ENCODE measurements at regions of chr22 and their contacts with region 1.

Region 1: DNA sequence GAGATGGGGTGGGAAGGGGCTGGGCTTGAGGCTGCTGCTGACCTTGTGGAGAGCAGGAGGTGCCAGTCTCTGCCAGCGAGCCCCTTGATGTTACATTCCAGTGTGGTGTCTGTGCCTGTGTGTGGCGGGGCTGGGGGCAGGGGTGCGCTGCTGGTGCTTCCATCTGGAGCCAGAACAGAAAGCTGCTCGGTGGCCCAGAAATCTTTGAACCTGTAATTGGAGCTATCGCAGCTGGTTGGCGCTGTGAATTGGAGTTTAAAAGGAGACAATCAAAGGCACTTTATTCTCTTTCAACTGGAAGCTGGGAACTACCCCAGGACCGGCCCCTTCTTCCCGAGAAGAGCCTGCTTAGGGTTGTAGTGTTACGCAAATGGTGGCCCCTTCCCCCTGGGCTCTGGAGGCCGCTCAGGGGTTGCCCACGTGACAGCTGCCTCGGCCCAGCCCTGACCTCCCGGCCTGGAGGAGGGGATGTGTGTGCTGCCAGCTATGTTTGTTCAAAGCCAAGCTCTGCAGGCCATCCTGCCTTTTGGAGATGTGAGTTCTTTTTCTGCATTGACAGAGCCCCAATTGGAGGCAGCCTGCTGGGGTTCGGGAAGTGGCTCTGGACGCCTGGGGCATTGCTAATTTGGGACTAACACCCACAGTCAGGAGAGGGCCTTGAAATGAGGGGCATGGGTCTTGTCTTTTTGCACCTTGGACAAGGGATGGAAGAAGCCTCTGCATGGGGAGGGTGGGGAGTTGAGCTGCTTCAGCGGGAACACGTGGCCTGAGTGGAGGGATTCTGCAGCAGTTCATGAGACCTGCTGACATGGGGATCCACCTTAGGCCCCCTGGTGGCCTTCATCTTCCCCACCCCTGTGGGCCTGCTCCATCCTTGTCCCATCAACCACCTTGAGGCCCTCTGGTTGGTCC is 14.0 kb upstream of the ARSA start:
- DNase-seq: peak; percentile 44 to 64 (median 63)
- H3K4me3 ChIP-seq: peak overlapping the region in 2 of 7 experiments; percentile 26 to 46
- H3K27ac ChIP-seq: no peak overlapping the region
- H3K4me1 ChIP-seq: peaks cover 0 to 13% (median 11%) of the 10 kb centered on the region in 4 experiments
- H3K27me3 ChIP-seq: peaks cover 0 to 11% (median 3%) of the 10 kb centered on the region in 5 experiments

Region 2: GRCh38 chr22:50610041-50610451 is 31.9 kb before region 1 on chr22:
- CTCF ChIA-PET with region 1: no interaction called
- POLR2A ChIA-PET with region 1: no interaction called
- DNase-seq: no peak
- H3K4me3 ChIP-seq: no peak overlapping the region
- H3K27ac ChIP-seq: no peak overlapping the region
- H3K4me1 ChIP-seq: no peaks in the 10 kb centered on the region
- H3K27me3 ChIP-seq: peaks cover 0 to 69% (median 15%) of the 10 kb centered on the region in 5 experiments

Region 3: DNA sequence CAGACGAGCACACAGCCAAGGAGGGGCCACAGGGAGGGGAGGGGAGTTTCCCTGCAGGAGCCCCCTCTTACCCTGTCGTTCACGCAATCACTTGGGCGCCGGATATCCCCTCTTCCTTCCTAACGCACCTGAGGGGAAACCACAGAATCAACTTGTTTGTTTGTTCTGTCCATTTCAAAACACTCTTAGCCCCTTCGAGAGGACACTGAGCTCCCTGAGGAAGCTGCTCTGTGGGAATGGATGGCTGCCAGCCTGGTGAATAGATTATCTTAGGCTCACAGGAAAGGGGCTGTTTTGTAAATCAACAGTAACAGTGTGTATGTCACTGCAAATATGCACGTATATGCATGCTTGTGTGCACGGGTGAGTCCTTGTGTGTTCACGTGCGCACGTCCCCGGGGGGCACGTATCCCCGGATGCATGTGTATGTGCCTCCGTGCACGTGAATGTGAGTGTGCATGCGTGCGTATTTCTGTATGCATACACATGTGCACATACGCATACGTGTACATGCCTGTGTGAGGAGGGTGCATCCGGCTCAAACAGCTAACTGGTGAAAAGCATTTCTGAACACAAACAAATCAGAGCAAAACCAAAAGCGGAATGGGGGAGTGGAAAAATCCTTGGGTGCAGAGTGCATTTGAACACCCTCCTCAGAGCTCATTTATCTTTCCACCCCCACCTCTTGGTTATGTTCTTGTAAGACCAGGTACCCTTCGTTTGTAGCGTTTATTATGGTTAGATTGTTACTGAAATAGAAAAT is 21.2 kb before region 1 on chr22:
- CTCF ChIA-PET with region 1: interaction called, 22 read pairs
- POLR2A ChIA-PET with region 1: no interaction called
- DNase-seq: peak; percentile 74 to 92 (median 88)
- H3K4me3 ChIP-seq: peak overlapping the region in 6 of 7 experiments; percentile 61 to 82 (median 66)
- H3K27ac ChIP-seq: no peak overlapping the region
- H3K4me1 ChIP-seq: peaks cover 13 to 35% (median 29%) of the 10 kb centered on the region in 4 experiments
- H3K27me3 ChIP-seq: no peaks in the 10 kb centered on the region

Region 4: DNA sequence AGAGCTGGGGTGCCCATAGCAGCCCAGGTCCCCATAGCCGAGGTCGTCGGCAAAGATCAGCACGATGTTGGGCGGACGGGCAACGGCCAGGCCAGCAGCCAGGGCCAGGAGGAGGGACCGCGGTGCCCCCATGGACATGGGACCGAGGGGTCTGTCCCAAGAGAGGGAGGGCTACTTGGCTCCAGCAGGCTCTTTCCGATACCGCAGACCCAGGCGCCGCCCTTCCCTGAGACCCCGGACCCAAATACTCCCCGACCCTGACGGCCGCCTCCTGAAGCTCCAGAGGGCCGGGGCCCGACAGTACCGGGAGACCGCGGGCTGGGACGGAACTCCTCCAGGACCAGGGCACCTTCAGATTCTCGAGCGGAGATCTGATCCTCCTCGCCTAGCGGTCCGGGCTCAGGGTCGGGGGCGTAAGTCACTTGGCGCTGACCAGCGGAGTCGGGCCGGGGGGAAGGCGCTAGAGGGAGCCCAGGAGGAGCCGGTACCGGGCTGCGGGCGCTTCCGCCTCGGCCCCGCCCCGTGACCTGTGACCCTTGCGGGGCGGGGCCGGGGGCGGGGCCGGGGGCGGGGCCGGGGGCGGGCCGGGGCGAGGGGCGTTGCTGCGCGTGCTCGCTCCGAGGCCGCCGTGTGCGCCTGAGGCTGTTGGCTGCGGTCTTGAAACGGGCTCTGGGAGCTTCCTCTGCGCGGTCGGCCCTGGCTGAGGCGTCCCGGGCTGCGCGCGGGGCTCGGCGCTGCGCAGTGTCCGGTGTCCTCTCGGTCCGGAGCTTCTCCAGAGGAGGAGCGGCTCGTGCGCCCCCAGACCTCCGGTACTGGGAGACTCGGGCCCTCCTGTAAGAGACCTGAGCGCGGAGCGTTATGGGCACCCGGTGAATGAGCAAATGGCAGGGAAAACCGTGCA is 14.1 kb before region 1 on chr22 and contains the start of gene ARSA:
- CTCF ChIA-PET with region 1: interaction called, 22 read pairs
- POLR2A ChIA-PET with region 1: interaction called, 9 read pairs
- DNase-seq: peak; percentile 80 to 85 (median 83)
- H3K4me3 ChIP-seq: peak within 1 kb of the TSS; percentile 58 to 83 (median 76)
- H3K27ac ChIP-seq: peak within 1 kb of the TSS; percentile 20 to 43
- H3K4me1 ChIP-seq: peaks cover 3 to 33% (median 19%) of the 10 kb centered on the region in 4 experiments
- H3K27me3 ChIP-seq: no peaks in the 10 kb centered on the region

Region 5: DNA sequence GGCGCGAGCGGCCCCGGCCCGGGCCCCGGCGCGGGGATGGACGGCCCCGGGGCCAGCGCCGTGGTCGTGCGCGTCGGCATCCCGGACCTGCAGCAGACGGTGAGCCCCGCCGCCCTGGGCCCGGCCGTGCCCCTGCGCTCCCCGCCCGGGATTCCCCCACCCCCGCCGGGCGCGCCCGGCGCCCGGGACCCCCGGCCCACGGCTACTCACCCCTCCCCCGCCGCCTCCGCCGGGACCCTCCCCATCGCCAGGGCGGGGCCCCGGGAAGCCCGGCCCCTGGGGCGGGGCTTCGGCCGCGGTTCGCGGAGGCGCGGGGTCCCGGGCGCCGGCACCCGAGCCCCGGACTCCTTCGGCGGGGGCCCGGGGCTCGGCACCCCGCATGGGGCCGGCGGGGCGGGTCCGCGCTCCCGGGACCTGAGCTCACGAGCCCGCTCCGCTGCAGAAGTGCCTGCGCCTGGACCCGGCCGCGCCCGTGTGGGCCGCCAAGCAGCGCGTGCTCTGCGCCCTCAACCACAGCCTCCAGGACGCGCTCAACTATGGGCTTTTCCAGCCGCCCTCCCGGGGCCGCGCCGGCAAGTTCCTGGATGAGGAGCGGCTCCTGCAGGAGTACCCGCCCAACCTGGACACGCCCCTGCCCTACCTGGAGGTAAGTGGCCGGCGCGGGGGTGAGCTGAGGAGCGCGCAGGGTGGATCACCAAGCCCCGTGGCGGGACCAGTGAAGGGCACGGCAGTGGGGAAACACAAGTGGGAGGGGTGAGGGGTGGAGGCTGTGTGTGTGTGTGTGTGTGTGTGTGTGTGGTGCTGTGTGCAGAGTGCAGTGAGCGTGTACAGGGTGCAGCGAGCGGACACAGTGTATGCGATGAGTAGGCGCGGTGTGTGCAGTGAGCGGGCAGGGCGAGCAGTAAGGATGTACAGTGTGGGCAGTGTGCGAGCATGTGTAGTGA is 32.9 kb after region 1 on chr22:
- CTCF ChIA-PET with region 1: interaction called, 33 read pairs
- POLR2A ChIA-PET with region 1: interaction called, 11 read pairs
- DNase-seq: peak in 2 of 3 donors; percentile 41 to 58
- H3K4me3 ChIP-seq: peak overlapping the region; percentile 44 to 77 (median 73)
- H3K27ac ChIP-seq: no peak overlapping the region
- H3K4me1 ChIP-seq: peaks cover 0 to 58% (median 44%) of the 10 kb centered on the region in 4 experiments
- H3K27me3 ChIP-seq: no peaks in the 10 kb centered on the region

Region 6: DNA sequence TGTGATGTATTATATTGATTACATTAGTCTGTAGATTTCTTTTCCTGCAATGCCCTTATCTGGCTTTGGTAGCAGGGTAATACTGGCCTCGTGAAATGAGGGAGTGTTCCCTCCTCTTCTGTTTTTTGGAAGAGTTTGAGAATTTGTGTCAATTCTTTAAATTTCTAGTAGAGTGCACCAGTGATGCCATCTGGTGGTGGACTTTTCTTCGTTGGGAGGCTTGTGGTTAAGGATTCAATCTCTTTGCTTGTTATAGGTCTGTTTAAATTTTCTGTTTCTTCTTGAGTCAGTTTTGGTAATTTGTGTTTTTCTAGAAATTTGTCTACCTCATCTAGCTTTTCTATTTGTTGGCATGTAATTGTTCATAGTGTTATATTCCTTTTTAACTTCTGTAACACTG is 49.6 kb after region 1 on chr22:
- CTCF ChIA-PET with region 1: interaction called, 22 read pairs
- POLR2A ChIA-PET with region 1: no interaction called
- DNase-seq: peak; percentile 61 to 83 (median 76)
- H3K4me3 ChIP-seq: no peak overlapping the region
- H3K27ac ChIP-seq: no peak overlapping the region
- H3K4me1 ChIP-seq: peaks cover 0 to 34% (median 18%) of the 10 kb centered on the region in 4 experiments
- H3K27me3 ChIP-seq: no peaks in the 10 kb centered on the region

Region 7: GRCh38 chr22:50739894-50740293 is 97.9 kb after region 1 on chr22:
- CTCF ChIA-PET with region 1: no interaction called
- POLR2A ChIA-PET with region 1: no interaction called
- DNase-seq: no peak
- H3K4me3 ChIP-seq: no peak overlapping the region
- H3K27ac ChIP-seq: no peak overlapping the region
- H3K4me1 ChIP-seq: no peaks in the 10 kb centered on the region
- H3K27me3 ChIP-seq: no peaks in the 10 kb centered on the region